ENCODE measurements at regions of chr17 and their contacts with region 1.

Region 1: DNA sequence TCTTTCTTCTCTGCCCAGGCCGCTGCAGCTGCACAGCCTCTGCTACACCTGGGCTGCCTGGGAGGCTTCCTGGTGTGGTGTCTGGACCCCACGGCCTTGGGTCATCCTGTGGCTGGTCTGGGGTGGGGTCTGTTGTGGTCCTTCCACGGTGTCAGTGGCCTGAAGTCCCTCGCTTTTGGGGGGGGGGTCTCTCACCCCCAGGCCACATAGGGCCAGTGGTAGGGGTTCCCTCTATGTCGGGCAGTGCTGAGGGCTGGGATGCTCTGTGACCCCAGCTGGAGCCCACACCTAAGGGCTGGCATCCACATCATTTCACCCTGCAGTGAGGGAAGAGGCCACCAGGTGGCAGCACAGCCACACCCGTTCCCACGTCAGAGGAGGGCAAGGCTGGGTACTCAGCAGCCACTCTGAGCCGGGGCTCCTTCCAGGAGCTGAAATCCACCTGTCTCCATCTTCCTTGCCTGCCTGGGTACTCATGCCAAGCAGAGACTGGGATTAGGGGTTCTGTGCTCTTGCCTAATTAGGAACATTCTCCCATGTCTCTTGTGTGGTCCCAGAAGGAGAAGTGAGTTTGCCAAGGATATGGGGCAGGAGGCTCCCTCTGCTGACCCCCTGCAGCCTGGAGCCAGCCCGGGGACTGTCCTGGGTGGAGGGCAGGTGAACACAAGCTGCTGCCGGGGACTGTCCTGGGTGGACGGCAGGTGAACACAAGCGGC is 13.0 kb downstream of the ENGASE start:
- DNase-seq: peak; percentile 89
- ATAC-seq: peak; percentile 85
- H3K4me3 ChIP-seq: no peak overlapping the region
- H3K27ac ChIP-seq: no peak overlapping the region
- H3K4me1 ChIP-seq: no peaks in the 10 kb centered on the region
- H3K27me3 ChIP-seq: no peaks in the 10 kb centered on the region
- CTCF ChIP-seq: peak; percentile 97

Region 2: DNA sequence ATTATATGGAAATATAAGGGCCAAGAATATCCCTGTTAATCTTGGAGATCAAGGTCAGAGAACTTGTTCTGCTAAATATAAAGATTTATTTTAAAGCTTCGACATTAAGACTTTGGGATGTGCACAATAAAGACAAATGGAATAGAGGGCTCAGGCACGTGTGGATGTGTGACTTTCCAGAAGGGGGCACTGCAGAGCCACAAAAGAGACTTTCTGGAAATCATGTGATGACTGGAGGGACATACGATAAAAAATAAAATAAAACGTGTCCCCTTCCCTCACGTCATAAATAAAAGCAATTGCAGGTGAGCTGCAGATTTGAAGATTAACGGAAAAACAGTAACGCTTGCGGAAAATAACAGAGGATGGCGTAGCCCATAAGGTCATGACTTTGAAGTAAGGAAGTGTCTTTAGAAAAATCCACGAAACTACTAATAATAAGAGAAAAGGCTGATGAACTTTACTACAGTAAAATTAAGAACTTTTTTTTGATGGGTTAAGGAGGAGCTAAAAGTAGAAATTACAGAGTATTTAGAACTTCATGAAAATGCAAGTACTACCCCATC is 22.4 kb before region 1 on chr17:
- CTCF ChIA-PET with region 1: interaction called, 11 read pairs
- POLR2A ChIA-PET with region 1: interaction called, 3 read pairs
- intact Hi-C with region 1: loop called (anchors 1 kb)
- DNase-seq: peak; percentile 78
- ATAC-seq: peak; percentile 63
- H3K4me3 ChIP-seq: no peak overlapping the region
- H3K27ac ChIP-seq: no peak overlapping the region
- H3K4me1 ChIP-seq: no peaks in the 10 kb centered on the region
- H3K27me3 ChIP-seq: no peaks in the 10 kb centered on the region
- CTCF ChIP-seq: peak; percentile 85

Region 3: DNA sequence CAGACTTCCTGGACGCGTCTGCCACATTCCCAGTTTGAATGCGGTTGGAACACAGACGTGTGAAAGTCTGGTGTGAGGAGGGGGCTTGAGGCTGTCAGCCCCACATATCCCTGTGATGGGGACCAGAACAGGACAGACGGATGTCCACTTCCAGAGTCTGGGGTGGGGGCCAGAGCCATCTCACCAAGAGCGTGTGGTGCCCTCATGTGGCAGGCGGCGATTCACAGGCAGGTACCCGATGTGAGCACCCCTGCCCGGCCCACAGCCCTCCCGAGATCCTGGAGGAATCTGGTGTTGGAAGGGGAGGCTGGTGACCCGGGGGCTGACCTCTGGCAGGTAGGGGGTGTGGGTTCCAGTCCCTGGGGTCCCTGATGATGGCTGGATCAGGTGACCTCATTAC is 38.6 kb after region 1 on chr17:
- CTCF ChIA-PET with region 1: no interaction called
- POLR2A ChIA-PET with region 1: no interaction called
- intact Hi-C with region 1: loop called (anchors 2 kb)
- DNase-seq: peak; percentile 33
- ATAC-seq: peak; percentile 64
- H3K4me3 ChIP-seq: no peak overlapping the region
- H3K27ac ChIP-seq: no peak overlapping the region
- H3K4me1 ChIP-seq: no peaks in the 10 kb centered on the region
- H3K27me3 ChIP-seq: peaks cover 98% of the 10 kb centered on the region
- CTCF ChIP-seq: peak; percentile 70

Region 4: GRCh38 chr17:79393358-79394202 is 306.0 kb after region 1 on chr17:
- CTCF ChIA-PET with region 1: interaction called, 11 read pairs
- POLR2A ChIA-PET with region 1: no interaction called
- intact Hi-C with region 1: loop called (anchors 1 kb)
- DNase-seq: peak; percentile 91
- ATAC-seq: peak; percentile 81
- H3K4me3 ChIP-seq: no peak overlapping the region
- H3K27ac ChIP-seq: no peak overlapping the region
- H3K4me1 ChIP-seq: no peaks in the 10 kb centered on the region
- H3K27me3 ChIP-seq: peaks cover 94% of the 10 kb centered on the region
- CTCF ChIP-seq: peak; percentile 98

Measured in PC-3 (cell line).